CD4-positive, alpha-beta T cell (primary cell): ENCODE measurements at regions of chr6 and their contacts with region 1.

Region 1: DNA sequence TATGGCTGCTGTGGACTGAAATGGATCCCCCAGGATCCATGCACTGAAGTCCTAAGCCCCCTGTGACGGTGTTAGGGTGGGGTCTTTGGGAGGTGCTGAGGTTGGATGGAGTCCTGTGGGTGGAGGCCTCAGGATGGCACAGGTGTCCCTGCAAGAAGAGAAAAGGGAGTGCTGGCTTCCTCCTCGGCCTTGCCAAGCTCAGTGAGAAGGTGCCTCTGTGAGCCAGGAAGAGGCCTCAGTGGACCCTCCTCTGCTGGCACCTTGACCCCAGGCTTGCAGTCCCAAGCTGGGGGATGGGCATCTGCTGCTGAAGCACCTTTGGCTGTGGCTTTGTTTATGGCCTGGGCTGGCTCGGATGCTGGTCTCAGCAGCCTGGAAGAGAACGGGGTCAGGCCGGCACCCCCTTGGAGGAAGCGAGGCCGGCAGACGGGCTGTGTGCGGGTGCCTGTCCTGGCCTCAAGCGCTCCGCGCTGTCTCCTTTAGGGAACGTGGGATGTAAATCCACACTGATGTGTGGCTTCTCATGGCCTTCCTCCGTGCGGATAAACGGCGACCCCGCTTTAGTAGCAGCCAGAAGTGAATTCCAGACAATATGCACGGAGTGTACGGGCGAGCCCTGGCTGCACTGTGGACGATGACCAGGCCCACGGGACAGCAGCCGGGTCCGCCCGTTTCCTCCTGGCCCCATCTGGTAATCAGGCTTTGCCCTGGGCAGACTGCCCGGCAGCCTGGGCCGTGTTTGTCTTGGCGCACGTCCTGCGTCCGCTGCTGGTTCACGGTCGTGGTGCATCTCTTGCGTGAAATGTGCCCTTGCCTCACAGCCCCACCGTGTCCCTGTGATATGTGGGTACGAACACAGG is 182.6 kb downstream of the ERMARD start:
- DNase-seq: no peak
- ATAC-seq: no peak
- H3K4me3 ChIP-seq: no peak overlapping the region
- H3K4me3 Mint-ChIP-seq: no peak overlapping the region
- H3K27ac ChIP-seq: no peak overlapping the region
- H3K27ac Mint-ChIP-seq: no peak overlapping the region
- H3K4me1 ChIP-seq: no peaks in the 10 kb centered on the region
- H3K4me1 Mint-ChIP-seq: no peaks in the 10 kb centered on the region
- H3K27me3 ChIP-seq: no peaks in the 10 kb centered on the region
- H3K27me3 Mint-ChIP-seq: peaks cover 5% of the 10 kb centered on the region
- CTCF ChIP-seq: no peak

Region 2: DNA sequence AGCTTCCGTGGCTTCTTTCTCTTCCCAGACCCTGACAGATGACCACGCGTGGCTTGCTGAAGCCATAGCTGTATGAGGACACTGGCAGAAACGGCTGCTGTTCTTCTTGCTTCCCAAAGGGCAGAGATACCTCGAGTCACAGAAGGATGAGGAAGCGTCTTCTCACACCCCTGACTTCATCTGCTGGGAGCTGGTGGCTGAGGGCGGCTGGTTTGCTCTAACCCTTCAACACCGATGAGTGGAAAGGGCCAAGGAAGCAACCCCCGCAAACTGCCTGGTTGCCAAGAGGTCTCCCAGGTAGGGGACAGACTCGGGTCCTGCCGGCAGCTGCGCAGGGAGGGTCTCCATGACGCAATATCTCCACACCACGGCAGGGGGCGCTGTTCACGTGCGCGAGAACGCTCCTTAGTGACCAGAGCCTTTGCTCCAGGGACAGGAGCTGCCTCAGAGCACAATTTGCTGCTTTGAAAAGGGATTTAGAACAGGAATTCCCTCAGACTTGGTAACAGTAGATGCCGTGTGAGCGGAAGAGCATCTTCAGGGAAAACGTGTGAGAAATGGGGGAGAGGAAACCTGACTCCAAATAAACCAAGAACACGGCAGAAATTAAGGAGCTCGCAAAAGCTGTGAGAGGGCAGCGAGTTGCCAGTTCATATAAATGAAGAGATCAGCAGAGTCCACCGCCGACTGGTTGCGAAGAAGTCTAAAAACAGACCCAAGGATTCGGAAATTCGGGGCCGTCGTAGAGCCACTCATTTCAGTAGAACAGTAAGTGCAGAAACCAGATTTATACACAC is 102.4 kb before region 1 on chr6:
- CTCF ChIA-PET with region 1: no interaction called
- POLR2A ChIA-PET with region 1: no interaction called
- intact Hi-C with region 1: loop called in 1 of 2 experiments (anchors 10 kb)
- DNase-seq: peak; percentile 42 to 81 (median 64)
- ATAC-seq: peak; percentile 48
- H3K4me3 ChIP-seq: no peak overlapping the region
- H3K4me3 Mint-ChIP-seq: no peak overlapping the region
- H3K27ac ChIP-seq: no peak overlapping the region
- H3K27ac Mint-ChIP-seq: no peak overlapping the region
- H3K4me1 ChIP-seq: peaks cover 6% of the 10 kb centered on the region
- H3K4me1 Mint-ChIP-seq: no peaks in the 10 kb centered on the region
- H3K27me3 ChIP-seq: peaks cover 13 to 18% of the 10 kb centered on the region in 2 experiments
- H3K27me3 Mint-ChIP-seq: peaks cover 61% of the 10 kb centered on the region
- CTCF ChIP-seq: peak; percentile 82